RWPE1 (cell line): ENCODE measurements at regions of chr15 and their contacts with region 1.

Region 1: DNA sequence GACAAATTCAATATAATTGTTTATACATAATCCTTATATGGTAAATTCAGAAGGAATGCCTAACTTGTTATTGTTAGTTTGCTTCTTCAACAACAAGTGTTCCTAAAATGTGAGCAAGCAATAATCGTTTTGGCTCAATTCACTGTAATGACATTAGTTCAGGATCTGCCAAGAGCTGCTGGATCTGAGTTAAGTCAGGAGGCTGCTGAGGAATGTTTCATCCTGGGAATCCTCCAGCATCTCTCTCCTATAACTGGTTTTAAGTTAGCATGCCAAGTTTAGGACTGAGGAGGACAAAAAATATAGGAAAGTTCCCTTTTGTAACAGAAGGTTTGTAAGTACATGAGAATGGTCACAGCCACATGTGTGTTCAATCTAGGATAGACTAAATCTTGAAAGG is 4.9 kb upstream of the GTF2A2 start:
- DNase-seq: no peak
- H3K27ac ChIP-seq: no peak overlapping the region
- CTCF ChIP-seq: no peak

Region 2: DNA sequence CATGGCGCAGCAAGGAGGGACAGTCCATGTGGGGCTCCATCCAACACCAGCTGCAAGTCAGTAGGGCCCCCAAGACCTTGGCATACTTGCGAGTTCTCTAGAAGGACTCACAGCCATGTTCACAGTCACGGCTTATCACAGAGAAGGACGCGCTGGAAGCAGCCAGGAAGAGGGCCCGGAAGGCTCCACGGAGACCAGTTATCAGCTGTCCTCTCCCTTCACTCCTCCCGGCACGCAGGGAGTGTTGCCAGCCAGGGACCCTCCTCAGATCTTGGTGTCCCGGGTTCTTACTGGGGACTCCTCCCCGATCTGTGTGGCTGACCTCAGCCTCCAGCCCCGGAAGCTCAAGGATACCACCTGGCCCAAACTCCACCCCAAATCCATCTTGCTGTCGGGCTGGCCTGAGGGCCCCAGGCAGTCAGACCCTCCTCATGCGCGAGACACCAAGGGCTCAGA is 796.8 kb before region 1 on chr15:
- CTCF ChIA-PET with region 1: no interaction called
- POLR2A ChIA-PET with region 1: no interaction called
- DNase-seq: no peak
- H3K27ac ChIP-seq: peak overlapping the region; percentile 49
- CTCF ChIP-seq: no peak

Region 3: GRCh38 chr15:60115579-60116380 is 453.5 kb after region 1 on chr15:
- CTCF ChIA-PET with region 1: interaction called, 10 read pairs
- POLR2A ChIA-PET with region 1: no interaction called
- DNase-seq: peak; percentile 9
- H3K27ac ChIP-seq: no peak overlapping the region
- CTCF ChIP-seq: no peak